ENCODE measurements at regions of chr5 and their contacts with region 1.

Region 1: DNA sequence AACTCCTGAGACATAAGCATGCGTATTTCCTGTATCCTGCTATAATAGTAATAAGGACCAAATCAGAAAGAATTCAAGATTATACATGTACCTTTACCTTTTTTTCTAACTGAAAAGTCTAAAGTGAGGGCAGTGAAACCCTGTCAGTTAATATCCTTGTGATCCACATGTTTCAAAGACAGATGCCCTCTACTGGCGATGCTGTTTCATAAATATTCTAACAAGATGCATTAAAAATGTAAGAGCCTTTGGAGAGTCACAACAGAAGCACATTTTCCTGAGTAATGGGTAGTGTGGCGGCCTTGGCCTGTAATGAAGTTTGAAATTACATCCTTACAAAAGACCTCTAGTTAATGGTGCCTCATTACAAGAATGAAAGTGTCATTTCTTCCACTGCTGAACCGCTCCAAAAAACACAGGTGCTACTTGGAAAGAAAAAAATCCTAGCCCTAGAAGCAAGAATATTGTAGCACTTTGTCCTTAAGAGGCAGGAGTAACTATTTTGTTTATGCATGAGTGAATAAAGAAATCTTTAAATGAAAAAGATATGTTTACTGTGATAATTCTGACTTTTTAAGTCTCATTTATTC is 232.6 kb downstream of the EPB41L4A start:
- DNase-seq: peak in 2 of 3 donors; percentile 24 to 41
- H3K4me3 ChIP-seq: no peak overlapping the region
- H3K4me3 Mint-ChIP-seq: no peak overlapping the region
- H3K27ac ChIP-seq: no peak overlapping the region
- H3K27ac Mint-ChIP-seq: no peak overlapping the region
- H3K4me1 ChIP-seq: peaks cover 10% of the 10 kb centered on the region in 2 donors
- H3K4me1 Mint-ChIP-seq: peaks cover 14% of the 10 kb centered on the region
- H3K27me3 ChIP-seq: peaks cover 7 to 8% of the 10 kb centered on the region in 2 donors
- H3K27me3 Mint-ChIP-seq: peaks cover 12 to 23% (median 21%) of the 10 kb centered on the region in 3 donors
- CTCF ChIP-seq: peak; percentile 75

Region 2: GRCh38 chr5:112533362-112533761 is 346.9 kb after region 1 on chr5:
- intact Hi-C with region 1: loop called in 1 of 2 experiments (anchors 10 kb)
- DNase-seq: peak in 1 of 3 donors; percentile 50
- H3K4me3 ChIP-seq: no peak overlapping the region
- H3K4me3 Mint-ChIP-seq: peak overlapping the region in 1 of 2 donors; percentile 27
- H3K27ac ChIP-seq: no peak overlapping the region
- H3K27ac Mint-ChIP-seq: peak overlapping the region in 6 of 7 donors; percentile 31 to 85 (median 80)
- H3K4me1 ChIP-seq: peaks cover 22 to 28% of the 10 kb centered on the region in 2 donors
- H3K4me1 Mint-ChIP-seq: peaks cover 45% of the 10 kb centered on the region
- H3K27me3 ChIP-seq: no peaks in the 10 kb centered on the region
- H3K27me3 Mint-ChIP-seq: peaks cover 0 to 1% (median 0%) of the 10 kb centered on the region in 3 donors
- CTCF ChIP-seq: no peak

Measured in CD14-positive monocyte (primary cell).